ENCODE measurements at regions of chr1 and their contacts with region 1.

Region 1: GRCh38 chr1:210311726-210312493 is 16.8 kb upstream of the HHAT start:
- DNase-seq: no peak
- ATAC-seq: peak in 1 of 3 donors; percentile 10
- H3K4me3 ChIP-seq: no peak overlapping the region
- H3K4me3 Mint-ChIP-seq: peak overlapping the region; percentile 32
- H3K27ac ChIP-seq: no peak overlapping the region
- H3K27ac Mint-ChIP-seq: no peak overlapping the region
- H3K4me1 ChIP-seq: peaks cover 7% of the 10 kb centered on the region
- H3K4me1 Mint-ChIP-seq: peaks cover 6 to 10% of the 10 kb centered on the region in 2 donors
- H3K27me3 ChIP-seq: no peaks in the 10 kb centered on the region
- H3K27me3 Mint-ChIP-seq: peaks cover 18 to 31% of the 10 kb centered on the region in 2 donors
- CTCF ChIP-seq: no peak

Region 2: DNA sequence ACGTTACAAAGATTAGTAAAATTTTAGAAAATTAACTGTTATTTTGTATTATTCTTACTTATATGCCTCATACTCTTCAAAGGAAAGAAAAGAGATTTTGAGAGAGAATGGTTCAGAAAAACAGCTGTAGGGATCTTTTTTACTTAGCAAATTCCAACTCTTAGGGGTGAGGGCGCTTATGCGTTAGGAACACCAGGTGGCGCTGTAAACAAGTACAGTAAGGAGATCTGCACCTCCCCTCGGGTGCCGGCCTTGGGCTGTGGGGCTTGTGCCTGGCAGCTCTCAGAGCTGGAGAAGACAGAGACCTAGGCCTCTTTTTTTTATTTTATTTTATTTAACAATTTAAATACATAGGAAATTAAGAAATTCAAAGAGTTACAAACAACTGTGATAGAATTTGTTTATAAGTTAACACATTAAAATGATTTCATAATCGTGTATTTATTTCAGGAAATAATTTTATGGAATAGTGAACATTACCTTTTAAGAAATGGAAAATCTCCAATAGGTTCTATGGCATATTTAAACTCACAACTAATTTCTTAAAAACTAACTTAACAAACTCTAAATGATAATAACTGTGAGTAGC is 451.5 kb before region 1 on chr1:
- intact Hi-C with region 1: loop called (anchors 1 kb)
- DNase-seq: peak; percentile 38 to 88
- ATAC-seq: peak; percentile 82 to 94 (median 82)
- H3K4me3 ChIP-seq: no peak overlapping the region
- H3K4me3 Mint-ChIP-seq: no peak overlapping the region
- H3K27ac ChIP-seq: no peak overlapping the region
- H3K27ac Mint-ChIP-seq: no peak overlapping the region
- H3K4me1 ChIP-seq: no peaks in the 10 kb centered on the region
- H3K4me1 Mint-ChIP-seq: no peaks in the 10 kb centered on the region
- H3K27me3 ChIP-seq: no peaks in the 10 kb centered on the region
- H3K27me3 Mint-ChIP-seq: peaks cover 0 to 3% of the 10 kb centered on the region in 2 donors
- CTCF ChIP-seq: peak; percentile 95

Region 3: DNA sequence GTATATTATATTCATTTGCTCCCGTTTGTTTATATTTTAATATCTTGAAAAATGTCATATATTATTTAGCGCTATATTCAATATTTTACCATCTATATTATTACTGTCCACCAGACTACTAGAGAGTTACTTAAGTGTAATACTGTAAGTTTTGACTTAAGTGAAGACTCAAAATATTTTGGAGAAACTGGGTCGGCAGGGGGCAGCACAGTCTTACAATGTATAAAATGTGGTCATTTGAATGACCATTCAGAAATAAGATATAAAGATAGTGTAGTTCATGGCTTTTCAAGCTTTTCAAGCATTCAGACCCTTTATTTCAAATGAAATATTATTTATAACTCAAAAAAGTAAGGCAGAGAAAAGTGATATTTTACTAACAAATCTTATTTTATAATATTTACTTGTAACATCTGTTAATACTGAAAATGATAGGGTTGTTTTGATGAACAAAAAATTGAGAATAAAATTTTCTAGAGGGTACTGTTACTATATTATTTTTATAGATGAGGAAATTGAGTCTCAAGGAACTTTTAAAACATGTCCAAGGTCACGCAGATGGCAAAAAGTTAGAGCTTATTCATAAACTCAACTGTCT is 168.3 kb before region 1 on chr1:
- intact Hi-C with region 1: loop called (anchors 1 kb)
- DNase-seq: peak in 1 of 2 donors; percentile 34
- ATAC-seq: no peak
- H3K4me3 ChIP-seq: no peak overlapping the region
- H3K4me3 Mint-ChIP-seq: no peak overlapping the region
- H3K27ac ChIP-seq: no peak overlapping the region
- H3K27ac Mint-ChIP-seq: no peak overlapping the region
- H3K4me1 ChIP-seq: no peaks in the 10 kb centered on the region
- H3K4me1 Mint-ChIP-seq: no peaks in the 10 kb centered on the region
- H3K27me3 ChIP-seq: peaks cover 2% of the 10 kb centered on the region
- H3K27me3 Mint-ChIP-seq: peaks cover 0 to 21% of the 10 kb centered on the region in 2 donors
- CTCF ChIP-seq: no peak